GM12878 (cell line): ENCODE measurements at regions of chr9 and their contacts with region 1.

Region 1: DNA sequence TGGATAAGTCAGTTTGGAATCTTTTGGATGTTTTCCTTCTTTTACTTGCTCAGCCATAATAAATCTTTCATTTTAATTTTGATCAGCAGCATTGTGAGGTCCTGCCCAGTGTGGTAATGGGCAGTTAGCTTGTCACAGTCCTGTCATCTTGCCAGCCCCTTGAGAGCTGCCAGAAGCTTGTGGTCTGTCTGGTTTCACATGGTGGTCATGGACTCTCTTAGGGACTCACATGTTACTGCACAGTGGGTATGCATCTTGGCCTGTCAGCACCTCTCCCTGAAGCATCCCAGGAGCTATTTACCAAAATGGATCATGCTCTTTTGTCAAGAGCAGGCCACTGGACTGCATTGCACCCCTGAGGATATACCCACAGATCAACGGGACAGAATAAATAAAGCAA is 60.3 kb downstream of the DAPK1 start:
- DNase-seq: peak; percentile 64
- ATAC-seq: peak; percentile 71
- H3K4me3 ChIP-seq: no peak overlapping the region
- H3K27ac ChIP-seq: peak overlapping the region; percentile 75
- H3K4me1 ChIP-seq: peaks cover 64% of the 10 kb centered on the region
- H3K27me3 ChIP-seq: no peaks in the 10 kb centered on the region
- CTCF ChIP-seq: no peak
- EP300 ChIP-seq: no peak
- POLR2A ChIP-seq: no peak
- RAD21 ChIP-seq: no peak

Region 2: GRCh38 chr9:87464110-87464965 is 93.7 kb before region 1 on chr9:
- CTCF ChIA-PET with region 1: no interaction called
- POLR2A ChIA-PET with region 1: interaction called, 3 read pairs
- RAD21 ChIA-PET with region 1: interaction called, 12 read pairs
- SMC1A ChIA-PET with region 1: interaction called, 8 read pairs
- in situ Hi-C with region 1: no loop called
- intact Hi-C with region 1: loop called (anchors 2 kb)
- DNase-seq: peak; percentile 82
- ATAC-seq: peak; percentile 86
- H3K4me3 ChIP-seq: peak overlapping the region; percentile 12; the same call in 1 of the 2 replicates
- H3K27ac ChIP-seq: peak overlapping the region; percentile 90
- H3K4me1 ChIP-seq: peaks cover 14% of the 10 kb centered on the region
- H3K27me3 ChIP-seq: no peaks in the 10 kb centered on the region
- CTCF ChIP-seq: no peak
- EP300 ChIP-seq: peak; percentile 77 to 84; a peak in 3 of 4 replicates
- POLR2A ChIP-seq: no peak
- RAD21 ChIP-seq: peak; percentile 6; the same call in 1 of the 2 replicates

Region 3: GRCh38 chr9:87547667-87548066 is 10.3 kb before region 1 on chr9:
- CTCF ChIA-PET with region 1: interaction called, 8 read pairs
- POLR2A ChIA-PET with region 1: interaction called, 4 read pairs
- RAD21 ChIA-PET with region 1: interaction called, 3 read pairs
- SMC1A ChIA-PET with region 1: interaction called, 30 read pairs
- in situ Hi-C with region 1: no loop called
- intact Hi-C with region 1: no loop called
- DNase-seq: no peak
- ATAC-seq: no peak
- H3K4me3 ChIP-seq: no peak overlapping the region
- H3K27ac ChIP-seq: no peak overlapping the region
- H3K4me1 ChIP-seq: no peaks in the 10 kb centered on the region
- H3K27me3 ChIP-seq: no peaks in the 10 kb centered on the region
- CTCF ChIP-seq: no peak; a peak in 1 of 6 replicates
- EP300 ChIP-seq: no peak
- POLR2A ChIP-seq: no peak
- RAD21 ChIP-seq: no peak

Region 4: DNA sequence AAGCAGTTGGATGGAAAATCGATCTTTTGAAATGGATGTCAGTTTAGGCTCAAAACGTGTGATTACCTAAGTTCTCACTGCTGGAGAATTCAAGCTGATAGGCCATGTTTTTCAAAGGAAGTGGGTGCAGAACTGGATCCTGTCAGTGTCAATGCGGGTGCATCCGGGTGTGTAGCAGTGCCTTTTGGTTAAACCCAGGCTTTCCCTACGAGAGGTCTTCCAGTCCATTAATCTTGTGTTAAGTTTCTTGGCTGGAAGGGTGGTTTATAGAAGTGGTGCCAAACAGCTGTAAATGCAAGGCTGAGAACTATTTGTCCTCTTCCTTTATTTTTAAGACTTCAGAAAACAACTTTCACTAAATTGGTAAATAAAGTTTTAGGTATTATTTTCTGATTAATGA is 11.5 kb after region 1 on chr9:
- CTCF ChIA-PET with region 1: interaction called, 7 read pairs
- POLR2A ChIA-PET with region 1: interaction called, 29 read pairs
- RAD21 ChIA-PET with region 1: interaction called, 9 read pairs
- SMC1A ChIA-PET with region 1: interaction called, 49 read pairs
- in situ Hi-C with region 1: no loop called
- intact Hi-C with region 1: no loop called
- DNase-seq: no peak
- ATAC-seq: peak; percentile 63
- H3K4me3 ChIP-seq: no peak overlapping the region
- H3K27ac ChIP-seq: peak overlapping the region; percentile 28; the same call in 1 of the 2 replicates
- H3K4me1 ChIP-seq: peaks cover 27% of the 10 kb centered on the region
- H3K27me3 ChIP-seq: no peaks in the 10 kb centered on the region
- CTCF ChIP-seq: no peak
- EP300 ChIP-seq: no peak
- POLR2A ChIP-seq: no peak
- RAD21 ChIP-seq: no peak

Region 5: DNA sequence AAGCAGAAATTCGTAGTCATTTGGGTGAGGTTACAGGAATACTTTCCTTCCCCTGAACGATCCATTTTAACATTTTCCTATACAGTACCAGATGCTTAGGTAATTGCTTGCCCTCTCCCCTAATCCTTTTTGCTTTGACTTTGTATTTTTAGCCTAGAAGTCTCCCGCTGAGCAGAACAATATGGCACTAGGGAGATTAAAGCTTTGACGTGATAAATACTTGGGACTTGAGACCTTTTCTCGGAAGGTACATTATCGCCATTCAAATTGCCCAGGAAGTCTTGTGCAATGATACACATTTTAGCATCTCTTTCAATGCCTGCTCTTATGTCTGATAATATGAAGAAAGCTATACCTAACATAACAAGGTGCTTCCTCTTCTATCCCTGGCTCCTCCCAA is 603.1 kb after region 1 on chr9:
- CTCF ChIA-PET with region 1: no interaction called
- POLR2A ChIA-PET with region 1: no interaction called
- RAD21 ChIA-PET with region 1: no interaction called
- SMC1A ChIA-PET with region 1: no interaction called
- in situ Hi-C with region 1: no loop called
- intact Hi-C with region 1: no loop called
- DNase-seq: no peak
- ATAC-seq: no peak
- H3K4me3 ChIP-seq: no peak overlapping the region
- H3K27ac ChIP-seq: no peak overlapping the region
- H3K4me1 ChIP-seq: no peaks in the 10 kb centered on the region
- H3K27me3 ChIP-seq: no peaks in the 10 kb centered on the region
- CTCF ChIP-seq: no peak
- EP300 ChIP-seq: no peak
- POLR2A ChIP-seq: no peak
- RAD21 ChIP-seq: no peak

Region 6: DNA sequence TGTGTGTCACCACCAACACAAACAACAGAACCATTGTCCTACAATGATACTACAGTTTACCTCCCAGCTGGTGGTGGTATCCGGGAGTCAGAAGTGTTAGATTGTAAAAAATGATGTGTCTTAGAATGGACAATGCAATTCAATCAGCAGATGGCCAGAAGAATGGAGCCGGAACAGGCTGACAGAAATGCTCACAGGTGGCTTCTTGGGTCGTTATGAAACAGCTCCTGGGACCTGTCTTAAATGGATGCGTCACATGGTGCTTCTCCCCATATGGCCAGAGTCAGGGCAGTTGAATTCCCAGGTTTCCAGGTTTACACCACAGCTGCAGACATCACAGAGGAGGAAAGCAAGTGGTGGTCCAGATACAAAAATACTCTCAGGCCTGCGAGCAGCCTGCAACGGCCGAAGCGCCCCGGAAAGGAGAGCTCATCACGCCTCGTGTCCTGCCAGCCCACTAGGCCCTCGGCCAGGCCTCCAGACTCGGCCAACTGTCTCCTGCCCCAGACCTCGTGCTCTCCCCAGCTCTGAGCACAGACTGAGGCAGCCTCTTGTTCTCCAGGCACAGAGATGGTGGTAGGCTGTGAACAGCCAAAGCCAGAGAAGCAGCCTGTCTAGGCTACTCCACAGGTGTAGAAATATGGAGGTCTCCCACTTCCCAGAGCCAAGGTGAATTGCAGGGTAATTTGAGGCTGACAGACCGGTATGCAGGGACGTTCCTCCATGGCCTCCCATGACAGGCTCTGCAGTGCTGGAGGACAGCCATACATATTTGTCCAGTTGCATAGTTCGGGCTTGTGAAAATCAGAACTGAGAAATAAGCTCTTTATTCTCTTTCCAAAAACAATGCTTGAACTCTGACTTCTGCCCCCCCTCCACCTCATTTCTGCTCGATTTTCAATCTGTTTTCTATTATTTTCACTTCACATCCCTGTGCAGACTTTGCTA is 678.8 kb after region 1 on chr9:
- CTCF ChIA-PET with region 1: no interaction called
- POLR2A ChIA-PET with region 1: no interaction called
- RAD21 ChIA-PET with region 1: no interaction called
- SMC1A ChIA-PET with region 1: no interaction called
- in situ Hi-C with region 1: no loop called
- intact Hi-C with region 1: no loop called
- DNase-seq: no peak
- ATAC-seq: no peak
- H3K4me3 ChIP-seq: no peak overlapping the region
- H3K27ac ChIP-seq: no peak overlapping the region
- H3K4me1 ChIP-seq: no peaks in the 10 kb centered on the region
- H3K27me3 ChIP-seq: no peaks in the 10 kb centered on the region
- CTCF ChIP-seq: no peak
- EP300 ChIP-seq: no peak
- POLR2A ChIP-seq: no peak
- RAD21 ChIP-seq: no peak